MCF 10A (cell line): ENCODE measurements at regions of chr17 and their contacts with region 1.

Region 1: DNA sequence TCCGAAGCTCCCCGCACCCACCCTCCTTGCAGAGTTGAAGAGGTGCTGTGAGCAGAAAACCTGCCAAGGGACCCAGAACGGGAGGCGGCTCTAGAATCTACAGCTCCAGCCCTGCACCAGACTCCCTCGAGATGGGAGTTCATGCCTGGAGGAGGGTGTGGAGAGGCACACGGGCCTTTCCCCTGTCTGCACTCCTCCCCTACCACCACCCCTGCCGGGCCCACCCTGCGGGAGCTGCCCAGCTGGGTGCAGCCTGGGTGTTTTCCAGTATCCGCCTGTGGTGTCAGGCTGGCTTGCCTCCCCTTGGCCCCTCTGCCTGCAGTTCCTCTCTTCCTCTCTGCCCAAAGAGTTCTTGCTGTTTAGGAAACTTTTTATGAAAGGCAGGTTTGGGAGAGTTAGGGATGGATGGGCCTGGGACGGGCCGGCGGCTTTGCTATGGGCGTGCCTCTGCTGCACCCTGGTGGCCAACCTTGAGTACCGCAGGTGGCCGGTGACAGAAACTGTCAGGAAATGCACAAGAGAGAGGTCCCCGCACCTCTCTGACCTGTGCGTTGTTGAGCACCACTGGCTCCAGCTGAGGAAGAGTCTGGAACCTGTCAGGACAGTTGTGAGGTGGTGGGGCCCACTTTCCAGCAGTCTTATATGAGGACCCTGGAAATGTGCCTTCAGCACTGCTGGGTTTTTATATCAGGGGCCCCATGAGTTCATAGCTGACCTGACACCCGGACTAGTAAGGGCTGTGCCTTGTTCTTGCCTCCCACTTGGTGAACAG is 354.1 kb downstream of the SEC14L1 start:
- DNase-seq: peak; percentile 71
- H3K4me3 Mint-ChIP-seq: no peak overlapping the region
- H3K27ac Mint-ChIP-seq: peak overlapping the region; percentile 8
- H3K4me1 Mint-ChIP-seq: no peaks in the 10 kb centered on the region
- H3K27me3 Mint-ChIP-seq: no peaks in the 10 kb centered on the region
- CTCF ChIP-seq: peak; percentile 94

Region 2: DNA sequence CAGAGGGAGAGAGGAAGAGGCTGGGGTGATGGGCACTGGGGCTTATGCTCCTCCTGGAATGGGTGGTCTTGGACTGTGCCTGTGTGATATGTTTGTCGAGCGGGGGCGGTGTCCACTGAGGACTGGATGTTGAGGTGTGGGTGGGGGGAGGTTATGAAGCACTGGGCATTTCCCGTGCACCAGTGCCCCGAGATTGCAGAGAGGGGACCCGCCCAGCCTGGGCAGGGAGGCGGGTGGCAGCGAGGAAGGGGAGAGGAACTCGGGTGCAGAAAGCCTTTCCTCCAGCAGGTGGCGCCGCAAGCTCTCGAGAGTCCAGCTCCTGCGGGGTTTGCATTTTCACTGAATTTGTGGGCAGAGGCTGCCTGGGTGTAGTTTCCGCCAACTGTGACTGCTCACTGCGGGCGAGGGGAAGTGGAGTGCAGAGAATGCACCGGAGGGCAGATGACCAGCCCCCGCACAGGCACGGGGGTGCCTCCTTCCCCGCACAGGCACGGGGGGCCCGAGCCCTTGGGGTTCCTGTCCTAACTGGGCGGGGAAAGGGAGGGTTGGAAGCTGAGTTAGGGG is 163.5 kb before region 1 on chr17:
- CTCF ChIA-PET with region 1: interaction called, 35 read pairs
- POLR2A ChIA-PET with region 1: interaction called, 9 read pairs
- intact Hi-C with region 1: loop called (anchors 1 kb)
- DNase-seq: peak; percentile 89
- H3K4me3 Mint-ChIP-seq: peak overlapping the region; percentile 48
- H3K27ac Mint-ChIP-seq: peak overlapping the region; percentile 46
- H3K4me1 Mint-ChIP-seq: peaks cover 33% of the 10 kb centered on the region
- H3K27me3 Mint-ChIP-seq: no peaks in the 10 kb centered on the region
- CTCF ChIP-seq: peak; percentile 97

Region 3: DNA sequence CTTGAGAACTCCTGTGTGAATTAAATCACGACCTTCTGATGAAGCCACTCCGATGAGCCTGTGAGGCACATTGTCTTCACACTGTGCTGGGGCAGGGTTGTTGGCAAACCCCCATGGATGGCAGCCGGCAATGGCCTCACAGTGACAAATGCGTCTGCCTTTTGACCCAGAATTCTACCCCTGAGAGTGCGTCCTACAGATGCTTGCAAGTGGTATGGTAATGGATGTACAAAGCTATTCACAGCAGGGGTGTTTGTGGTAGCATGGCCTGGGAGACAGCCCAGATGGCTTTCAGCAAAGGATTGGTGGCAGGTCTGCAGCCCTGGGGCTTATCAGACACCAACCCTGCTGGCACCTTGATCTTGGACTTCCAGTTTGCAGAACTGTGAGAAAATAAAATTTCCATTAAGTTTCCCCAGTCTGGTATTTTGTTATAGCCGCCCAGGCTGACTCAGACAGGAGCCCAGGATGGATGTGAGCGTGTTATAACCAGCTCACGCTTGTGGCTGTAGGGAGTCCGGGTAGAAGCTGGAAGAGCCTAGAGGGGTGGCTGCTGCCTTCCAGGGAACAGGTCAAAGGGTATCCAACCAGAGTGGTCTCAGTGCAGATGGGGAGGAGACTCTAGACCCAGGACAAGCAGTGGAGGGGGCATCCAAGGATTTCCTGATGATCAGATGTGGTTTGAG is 702.4 kb after region 1 on chr17:
- CTCF ChIA-PET with region 1: no interaction called
- POLR2A ChIA-PET with region 1: no interaction called
- intact Hi-C with region 1: no loop called
- DNase-seq: no peak
- H3K4me3 Mint-ChIP-seq: no peak overlapping the region
- H3K27ac Mint-ChIP-seq: peak overlapping the region; percentile 49
- H3K4me1 Mint-ChIP-seq: peaks cover 5% of the 10 kb centered on the region
- H3K27me3 Mint-ChIP-seq: no peaks in the 10 kb centered on the region
- CTCF ChIP-seq: no peak